ENCODE measurements at regions of chr11 and their contacts with region 1.

Region 1: GRCh38 chr11:15159085-15159484 is 44.4 kb downstream of the INSC start:
- DNase-seq: no peak
- ATAC-seq: peak; percentile 97
- H3K4me3 Mint-ChIP-seq: no peak overlapping the region
- H3K27ac Mint-ChIP-seq: no peak overlapping the region
- H3K4me1 Mint-ChIP-seq: no peaks in the 10 kb centered on the region
- H3K27me3 Mint-ChIP-seq: no peaks in the 10 kb centered on the region
- CTCF ChIP-seq: peak; percentile 42; the same call in 1 of the 2 replicates

Region 2: DNA sequence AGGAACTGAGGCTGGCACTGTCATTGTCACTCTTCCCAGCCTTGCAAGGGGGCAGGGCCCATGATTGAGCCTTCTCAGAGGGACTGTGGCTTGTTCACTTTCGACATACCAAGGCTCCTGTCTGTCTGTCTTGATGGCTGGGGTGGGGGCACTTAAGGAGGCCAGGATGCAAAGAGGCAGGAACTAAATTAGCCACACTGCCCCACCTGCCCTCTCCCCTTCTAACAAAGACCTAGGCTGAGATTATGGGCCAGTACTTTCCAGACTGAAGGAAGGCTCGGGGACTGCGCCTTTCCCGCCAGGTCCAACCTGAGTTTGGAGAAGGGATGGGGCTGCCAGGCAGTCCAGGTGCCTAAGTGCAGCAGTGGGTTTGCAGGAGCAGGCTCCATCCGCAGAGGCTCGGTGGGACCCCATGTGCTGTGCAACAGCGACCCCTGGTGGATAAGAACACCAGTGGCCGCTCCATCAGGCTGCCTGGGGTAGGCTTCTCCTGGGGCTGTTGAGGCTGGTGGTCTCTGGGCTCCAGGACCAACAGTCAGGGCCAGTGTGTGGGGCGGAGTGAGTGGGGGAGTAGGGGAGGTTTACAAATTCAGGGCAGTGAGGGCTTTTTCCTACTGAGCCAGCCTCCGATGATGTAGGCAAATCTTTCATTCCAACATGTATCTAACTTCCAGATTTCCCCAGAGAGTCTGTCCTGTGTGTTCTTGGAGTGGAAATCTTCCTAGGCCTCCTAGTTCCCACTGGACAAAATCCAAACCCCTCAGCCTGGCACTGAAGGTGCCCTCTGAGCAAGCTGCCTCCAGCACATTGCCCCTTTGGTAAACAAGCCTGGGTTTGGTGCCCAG is 49.5 kb after region 1 on chr11:
- CTCF ChIA-PET with region 1: interaction called, 10 read pairs
- POLR2A ChIA-PET with region 1: no interaction called
- DNase-seq: peak; percentile 90
- ATAC-seq: peak; percentile 98
- H3K4me3 Mint-ChIP-seq: no peak overlapping the region
- H3K27ac Mint-ChIP-seq: no peak overlapping the region
- H3K4me1 Mint-ChIP-seq: no peaks in the 10 kb centered on the region
- H3K27me3 Mint-ChIP-seq: no peaks in the 10 kb centered on the region
- CTCF ChIP-seq: peak; percentile 94

Region 3: DNA sequence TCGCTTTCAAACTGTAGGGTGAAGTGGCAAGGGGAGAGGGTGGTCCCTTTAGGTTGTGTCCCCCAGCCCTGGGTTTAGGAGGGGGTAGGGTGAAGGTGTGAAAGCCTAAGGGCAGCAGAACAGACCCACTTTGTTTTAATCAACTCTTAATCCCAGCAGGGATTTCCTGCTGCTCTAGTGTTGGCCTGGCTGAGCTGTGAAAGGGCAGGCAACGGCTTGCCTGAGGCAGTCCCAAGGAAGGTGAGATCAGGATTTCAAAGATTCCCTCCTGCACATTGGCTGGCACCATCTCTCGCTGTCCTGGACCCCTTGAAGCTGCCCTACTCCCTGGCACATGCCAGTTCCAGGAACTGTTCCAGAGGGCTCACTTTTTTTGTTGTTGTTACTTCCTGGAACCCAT is 176.9 kb after region 1 on chr11:
- CTCF ChIA-PET with region 1: no interaction called
- POLR2A ChIA-PET with region 1: no interaction called
- DNase-seq: peak; percentile 12
- ATAC-seq: peak; percentile 87
- H3K4me3 Mint-ChIP-seq: no peak overlapping the region
- H3K27ac Mint-ChIP-seq: no peak overlapping the region
- H3K4me1 Mint-ChIP-seq: peaks cover 15% of the 10 kb centered on the region
- H3K27me3 Mint-ChIP-seq: peaks cover 3% of the 10 kb centered on the region; the same call in 1 of the 2 replicates
- CTCF ChIP-seq: no peak

Measured in WTC11 (cell line).